H1 (cell line): ENCODE measurements at regions of chr9 and their contacts with region 1.

Region 1: GRCh38 chr9:127734747-127735529 is at the start of gene TOR2A:
- DNase-seq: peak; percentile 96 to 99
- H3K4me3 ChIP-seq: peak within 1 kb of the TSS; percentile 35 to 78 (median 67)
- H3K27ac ChIP-seq: peak within 1 kb of the TSS; percentile 46; the same call in 1 of the 2 replicates
- H3K4me1 ChIP-seq: peaks cover 3 to 11% (median 6%) of the 10 kb centered on the region in 4 experiments; a peak in 6 of 7 replicates
- H3K27me3 ChIP-seq: no peaks in the 10 kb centered on the region
- CTCF ChIP-seq: peak in 2 of 3 experiments; percentile 92 to 99; a peak in 3 of 4 replicates
- EP300 ChIP-seq: peak in 1 of 2 experiments; percentile 68; a peak in 1 of 3 replicates
- POLR2A ChIP-seq: no peak
- RAD21 ChIP-seq: peak; percentile 89 to 93
- total RNA-seq, gene TOR2A: 18.4 and 18.7 TPM in 2 replicates

Region 2: GRCh38 chr9:127707726-127708147 is 27.2 kb before region 1 on chr9:
- CTCF ChIA-PET with region 1: interaction called, 23 read pairs
- POLR2A ChIA-PET with region 1: interaction called, 3 read pairs
- DNase-seq: no peak
- H3K4me3 ChIP-seq: no peak overlapping the region
- H3K27ac ChIP-seq: no peak overlapping the region
- H3K4me1 ChIP-seq: peaks cover 0 to 27% (median 18%) of the 10 kb centered on the region in 4 experiments; a peak in 6 of 7 replicates
- H3K27me3 ChIP-seq: no peaks in the 10 kb centered on the region; a peak in 2 of 7 replicates
- CTCF ChIP-seq: peak in 1 of 3 experiments; percentile 41; a peak in 2 of 4 replicates
- EP300 ChIP-seq: no peak
- POLR2A ChIP-seq: no peak
- RAD21 ChIP-seq: peak; percentile 35 to 54; a peak in 2 of 4 replicates

Region 3: GRCh38 chr9:127723450-127723849 is 11.5 kb before region 1 on chr9:
- CTCF ChIA-PET with region 1: interaction called, 22 read pairs
- POLR2A ChIA-PET with region 1: interaction called, 11 read pairs
- DNase-seq: no peak
- H3K4me3 ChIP-seq: no peak overlapping the region
- H3K27ac ChIP-seq: no peak overlapping the region
- H3K4me1 ChIP-seq: peaks cover 0 to 18% (median 13%) of the 10 kb centered on the region in 4 experiments; a peak in 5 of 7 replicates
- H3K27me3 ChIP-seq: no peaks in the 10 kb centered on the region
- CTCF ChIP-seq: no peak
- EP300 ChIP-seq: no peak
- POLR2A ChIP-seq: no peak
- RAD21 ChIP-seq: no peak

Region 4: DNA sequence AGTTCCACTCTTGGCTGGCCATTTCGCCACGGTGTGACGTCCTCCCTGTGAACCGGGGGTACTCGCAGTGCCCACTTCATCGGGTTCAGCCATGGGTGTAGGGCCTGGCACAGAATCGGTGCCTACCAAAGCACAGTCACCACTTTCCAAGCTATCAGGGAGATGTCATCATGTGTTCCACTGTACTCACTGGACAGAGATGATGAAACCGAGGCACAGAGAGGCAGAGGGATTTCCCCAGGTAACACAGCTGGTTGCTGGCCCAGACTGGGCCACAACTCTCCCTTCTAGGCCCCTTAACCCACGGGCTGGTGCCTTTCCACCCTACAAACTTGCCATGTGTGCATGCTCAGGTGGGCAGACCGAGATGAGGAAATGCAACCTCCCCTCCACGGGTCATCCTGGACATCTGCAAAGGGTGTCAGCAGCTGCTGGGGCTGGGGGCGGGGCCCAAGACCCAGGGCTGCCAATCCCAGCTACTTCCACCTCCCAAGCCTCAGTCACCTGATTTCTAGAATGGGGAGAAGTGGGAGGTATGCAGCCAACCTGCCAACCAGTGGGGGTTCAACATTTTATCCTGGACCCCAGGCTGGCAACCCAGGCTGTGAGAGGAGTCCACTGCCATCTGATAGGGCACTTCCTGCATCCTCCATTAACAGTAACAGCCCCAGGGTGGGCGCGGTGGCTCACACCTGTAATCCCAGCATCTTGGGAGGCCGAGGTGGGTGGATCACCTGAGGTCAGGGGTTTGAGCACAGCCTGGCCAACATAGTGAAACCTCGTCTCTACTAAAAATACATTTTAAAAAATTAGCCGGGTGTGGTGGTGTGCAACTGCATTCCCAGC is 44.4 kb after region 1 on chr9:
- CTCF ChIA-PET with region 1: interaction called, 37 read pairs
- POLR2A ChIA-PET with region 1: interaction called, 3 read pairs
- DNase-seq: no peak
- H3K4me3 ChIP-seq: no peak overlapping the region
- H3K27ac ChIP-seq: no peak overlapping the region; the same call in 1 of the 2 replicates
- H3K4me1 ChIP-seq: peaks cover 0 to 20% (median 15%) of the 10 kb centered on the region in 4 experiments; a peak in 6 of 7 replicates
- H3K27me3 ChIP-seq: no peaks in the 10 kb centered on the region
- CTCF ChIP-seq: no peak
- EP300 ChIP-seq: no peak
- POLR2A ChIP-seq: no peak
- RAD21 ChIP-seq: no peak